CD4-positive, alpha-beta T cell (primary cell): ENCODE measurements at regions of chr19 and their contacts with region 1.

Region 1: DNA sequence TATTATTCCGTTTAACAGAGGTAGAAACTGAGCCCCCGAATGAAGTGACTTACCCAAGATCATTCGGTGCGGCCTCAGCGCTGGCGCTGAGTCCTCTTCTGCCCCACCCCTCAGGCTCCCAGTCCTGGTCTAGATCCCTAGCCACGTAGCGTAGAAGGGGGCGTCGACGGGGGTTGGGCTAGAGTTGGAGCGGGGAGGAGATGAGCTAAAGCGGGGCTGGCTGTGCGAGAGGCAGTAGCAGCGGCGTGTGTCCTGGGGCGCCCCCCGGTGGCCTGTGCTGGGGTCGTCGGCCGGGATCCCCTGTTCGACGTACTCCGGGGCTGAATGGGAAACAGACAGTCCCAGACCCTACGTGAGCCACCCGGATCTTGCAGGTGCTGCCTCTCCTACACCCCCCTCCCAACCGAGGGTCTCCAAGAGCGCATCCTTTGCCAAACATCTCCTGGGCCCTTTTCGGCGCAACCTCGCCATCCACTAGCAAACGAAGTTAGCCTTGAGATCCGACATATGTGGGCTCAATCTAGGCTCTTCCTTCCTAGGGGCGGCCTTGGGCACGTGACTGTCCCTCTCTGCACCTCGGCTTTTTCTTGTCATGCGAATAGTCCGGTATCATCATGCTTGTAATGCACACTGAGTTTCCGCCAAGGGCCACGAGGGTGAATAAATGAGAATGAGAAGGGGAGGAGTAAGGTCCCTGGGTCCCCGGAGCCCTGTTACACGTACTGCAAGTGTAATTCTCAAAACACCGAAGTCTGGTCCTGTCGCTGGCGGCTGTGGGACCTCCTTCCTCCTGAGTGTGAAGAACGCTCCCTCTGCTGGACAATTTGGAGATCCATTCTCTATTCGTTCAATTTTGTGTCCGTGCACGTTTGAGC is 47.7 kb downstream of the CYP4F22 start:
- DNase-seq: peak; percentile 92 to 99 (median 96)
- ATAC-seq: peak; percentile 86
- H3K4me3 ChIP-seq: peak overlapping the region; percentile 60
- H3K4me3 Mint-ChIP-seq: peak overlapping the region; percentile 83
- H3K27ac ChIP-seq: peak overlapping the region; percentile 55 to 73
- H3K27ac Mint-ChIP-seq: peak overlapping the region; percentile 83
- H3K4me1 ChIP-seq: peaks cover 31% of the 10 kb centered on the region
- H3K4me1 Mint-ChIP-seq: peaks cover 16% of the 10 kb centered on the region
- H3K27me3 ChIP-seq: peaks cover 0 to 3% of the 10 kb centered on the region in 2 experiments
- H3K27me3 Mint-ChIP-seq: peaks cover 4% of the 10 kb centered on the region
- CTCF ChIP-seq: peak; percentile 81

Region 2: GRCh38 chr19:15177269-15178116 is 378.5 kb before region 1 on chr19:
- CTCF ChIA-PET with region 1: interaction called, 5 read pairs
- POLR2A ChIA-PET with region 1: no interaction called
- intact Hi-C with region 1: loop called (anchors 1 kb)
- DNase-seq: peak; percentile 66 to 92 (median 80)
- ATAC-seq: peak; percentile 100
- H3K4me3 ChIP-seq: no peak overlapping the region
- H3K4me3 Mint-ChIP-seq: no peak overlapping the region
- H3K27ac ChIP-seq: no peak overlapping the region
- H3K27ac Mint-ChIP-seq: no peak overlapping the region
- H3K4me1 ChIP-seq: peaks cover 7% of the 10 kb centered on the region
- H3K4me1 Mint-ChIP-seq: peaks cover 5% of the 10 kb centered on the region
- H3K27me3 ChIP-seq: peaks cover 0 to 6% of the 10 kb centered on the region in 2 experiments
- H3K27me3 Mint-ChIP-seq: peaks cover 21% of the 10 kb centered on the region
- CTCF ChIP-seq: peak; percentile 79

Region 3: DNA sequence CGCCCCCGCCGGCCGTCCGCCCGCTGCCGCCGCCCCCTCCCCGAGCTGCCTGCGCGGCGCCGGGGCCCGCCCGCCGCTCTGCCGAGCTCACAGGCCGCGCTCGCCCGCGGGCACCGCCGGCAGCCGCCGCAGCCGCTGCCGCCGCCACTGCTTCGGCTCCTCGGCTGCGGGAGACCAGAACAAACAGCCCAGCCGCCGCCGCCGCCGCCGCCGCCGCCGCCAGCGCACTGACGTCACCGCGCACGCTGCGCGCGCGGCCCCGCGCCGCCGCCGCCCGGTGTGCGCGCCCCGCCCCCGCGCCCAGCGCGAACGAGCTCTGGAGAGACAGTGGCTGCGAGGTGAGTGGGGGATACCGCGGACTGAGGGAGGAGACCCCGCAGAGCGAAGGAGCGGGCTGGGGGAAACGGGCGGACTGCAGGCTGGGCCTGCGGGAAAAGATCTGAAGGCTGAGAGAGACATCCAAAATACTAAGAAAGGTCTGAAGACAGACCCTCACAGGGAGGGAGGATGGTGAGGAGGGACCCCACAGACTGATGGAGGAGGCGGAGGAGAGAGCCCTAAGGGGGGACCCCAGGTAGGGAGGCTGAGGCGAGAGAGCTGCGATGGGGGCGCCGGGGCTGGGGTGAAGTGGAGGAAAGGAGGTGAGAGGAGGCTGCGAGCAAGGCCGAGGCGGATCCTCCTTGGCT is 223.5 kb before region 1 on chr19 and contains the start of gene BRD4:
- CTCF ChIA-PET with region 1: no interaction called
- POLR2A ChIA-PET with region 1: interaction called, 6 read pairs
- intact Hi-C with region 1: loop called in 1 of 2 experiments (anchors 2 kb)
- DNase-seq: peak; percentile 59 to 92 (median 72)
- ATAC-seq: peak; percentile 63
- H3K4me3 ChIP-seq: peak within 1 kb of the TSS; percentile 90
- H3K4me3 Mint-ChIP-seq: peak within 1 kb of the TSS; percentile 96
- H3K27ac ChIP-seq: peak within 1 kb of the TSS; percentile 51 to 67
- H3K27ac Mint-ChIP-seq: peak within 1 kb of the TSS; percentile 88
- H3K4me1 ChIP-seq: peaks cover 45% of the 10 kb centered on the region
- H3K4me1 Mint-ChIP-seq: peaks cover 47% of the 10 kb centered on the region
- H3K27me3 ChIP-seq: no peaks in the 10 kb centered on the region
- H3K27me3 Mint-ChIP-seq: no peaks in the 10 kb centered on the region
- CTCF ChIP-seq: no peak
- total RNA-seq, gene BRD4: 101 to 102 TPM

Region 4: GRCh38 chr19:15449620-15450527 is 106.1 kb before region 1 on chr19 and contains the start of gene WIZ:
- CTCF ChIA-PET with region 1: interaction called, 11 read pairs
- POLR2A ChIA-PET with region 1: interaction called, 3 read pairs
- intact Hi-C with region 1: no loop called
- DNase-seq: peak; percentile 75 to 92 (median 84)
- ATAC-seq: peak; percentile 83
- H3K4me3 ChIP-seq: peak within 1 kb of the TSS; percentile 47
- H3K4me3 Mint-ChIP-seq: peak within 1 kb of the TSS; percentile 92
- H3K27ac ChIP-seq: peak within 1 kb of the TSS in 1 of 2 donors; percentile 79
- H3K27ac Mint-ChIP-seq: peak within 1 kb of the TSS; percentile 81
- H3K4me1 ChIP-seq: peaks cover 30% of the 10 kb centered on the region
- H3K4me1 Mint-ChIP-seq: peaks cover 30% of the 10 kb centered on the region
- H3K27me3 ChIP-seq: no peaks in the 10 kb centered on the region
- H3K27me3 Mint-ChIP-seq: no peaks in the 10 kb centered on the region
- CTCF ChIP-seq: no peak
- total RNA-seq, gene WIZ: 12.9 to 14.3 TPM